CD4-positive, alpha-beta T cell (primary cell): ENCODE measurements at regions of chr19 and their contacts with region 1.

Region 1: DNA sequence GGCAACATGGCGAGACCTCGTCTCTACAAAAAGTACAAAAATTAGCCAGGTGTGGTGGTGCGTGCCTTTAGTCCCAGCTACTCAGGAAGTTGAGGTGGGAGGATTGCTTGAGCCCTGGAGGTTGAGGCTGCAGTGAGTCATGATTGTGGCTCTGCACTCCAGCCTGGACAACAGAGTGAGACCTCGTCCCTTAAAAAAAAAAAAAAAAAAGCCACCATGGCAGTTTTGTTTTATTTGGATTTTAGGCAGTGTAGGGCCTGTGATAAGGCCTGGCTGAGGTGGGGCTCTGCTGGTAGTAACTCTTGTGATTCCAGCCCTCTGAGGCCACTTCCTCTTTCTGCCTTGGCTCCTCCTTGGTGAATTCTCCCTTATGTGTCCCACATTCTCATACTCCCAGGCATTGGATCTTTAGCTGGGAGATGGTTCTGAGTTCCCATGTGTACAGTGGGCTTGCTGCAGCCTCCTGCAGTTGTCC is 39.2 kb downstream of the GATAD2A start:
- DNase-seq: peak in 3 of 14 experiments; percentile 40 to 63 (median 49)
- ATAC-seq: no peak
- H3K4me3 ChIP-seq: no peak overlapping the region
- H3K4me3 Mint-ChIP-seq: peak overlapping the region; percentile 42
- H3K27ac ChIP-seq: peak overlapping the region in 1 of 2 donors; percentile 73
- H3K27ac Mint-ChIP-seq: peak overlapping the region; percentile 73
- H3K4me1 ChIP-seq: peaks cover 70% of the 10 kb centered on the region
- H3K4me1 Mint-ChIP-seq: peaks cover 66% of the 10 kb centered on the region
- H3K27me3 ChIP-seq: no peaks in the 10 kb centered on the region
- H3K27me3 Mint-ChIP-seq: no peaks in the 10 kb centered on the region
- CTCF ChIP-seq: no peak

Region 2: GRCh38 chr19:19459707-19460251 is 15.1 kb after region 1 on chr19:
- CTCF ChIA-PET with region 1: no interaction called
- POLR2A ChIA-PET with region 1: interaction called, 18 read pairs
- intact Hi-C with region 1: loop called in 1 of 2 experiments (anchors 2 kb)
- DNase-seq: peak; percentile 32 to 89 (median 62)
- ATAC-seq: peak; percentile 68
- H3K4me3 ChIP-seq: peak overlapping the region; percentile 50
- H3K4me3 Mint-ChIP-seq: peak overlapping the region; percentile 89
- H3K27ac ChIP-seq: peak overlapping the region; percentile 88 to 91
- H3K27ac Mint-ChIP-seq: peak overlapping the region; percentile 95
- H3K4me1 ChIP-seq: peaks cover 90% of the 10 kb centered on the region
- H3K4me1 Mint-ChIP-seq: peaks cover 75% of the 10 kb centered on the region
- H3K27me3 ChIP-seq: no peaks in the 10 kb centered on the region
- H3K27me3 Mint-ChIP-seq: no peaks in the 10 kb centered on the region
- CTCF ChIP-seq: no peak

Region 3: DNA sequence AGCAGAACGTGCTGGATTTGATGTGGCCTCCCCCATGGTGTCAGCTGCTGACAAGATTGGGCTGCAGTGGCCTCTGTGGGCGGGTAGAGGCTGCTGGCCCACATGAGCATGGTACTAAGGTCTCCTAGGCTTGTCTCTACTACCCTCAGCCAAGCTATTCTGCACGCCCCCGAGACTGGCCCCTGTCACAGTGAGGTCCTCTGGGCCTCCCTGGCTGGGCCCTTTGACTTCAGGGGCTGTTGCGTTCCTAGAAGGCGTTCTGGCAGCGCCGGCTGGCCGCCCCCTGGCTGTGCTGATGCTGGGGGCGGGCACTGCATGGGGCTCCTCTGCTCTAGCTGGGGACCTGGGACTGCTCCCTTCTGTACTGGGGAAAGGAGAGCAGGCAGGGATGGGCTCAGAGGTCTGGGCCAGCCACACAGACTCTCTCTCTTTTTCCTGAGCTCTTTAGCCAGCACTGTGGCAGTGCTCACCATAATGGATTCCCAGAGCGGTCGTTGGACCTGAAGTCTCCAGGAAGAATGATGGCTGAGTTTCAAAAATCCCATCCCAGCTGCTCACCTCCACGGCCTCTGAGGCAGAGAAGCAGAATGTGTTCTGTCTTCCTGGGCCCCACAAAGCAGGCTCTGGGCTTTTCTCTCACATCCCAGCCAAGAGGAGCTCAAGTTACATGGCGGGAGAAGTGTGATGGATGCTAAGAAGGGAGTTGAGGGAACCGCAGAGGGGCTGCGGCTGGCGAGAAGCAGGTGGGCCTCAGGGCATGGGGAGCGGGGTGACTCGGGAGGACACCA is 38.3 kb after region 1 on chr19:
- CTCF ChIA-PET with region 1: interaction called, 6 read pairs
- POLR2A ChIA-PET with region 1: no interaction called
- intact Hi-C with region 1: loop called in 1 of 2 experiments (anchors 5 kb)
- DNase-seq: no peak
- ATAC-seq: peak; percentile 32
- H3K4me3 ChIP-seq: no peak overlapping the region
- H3K4me3 Mint-ChIP-seq: no peak overlapping the region
- H3K27ac ChIP-seq: no peak overlapping the region
- H3K27ac Mint-ChIP-seq: peak overlapping the region; percentile 80
- H3K4me1 ChIP-seq: peaks cover 64% of the 10 kb centered on the region
- H3K4me1 Mint-ChIP-seq: peaks cover 62% of the 10 kb centered on the region
- H3K27me3 ChIP-seq: no peaks in the 10 kb centered on the region
- H3K27me3 Mint-ChIP-seq: no peaks in the 10 kb centered on the region
- CTCF ChIP-seq: no peak